CD4-positive, alpha-beta memory T cell (primary cell): ENCODE measurements at regions of chr16 and their contacts with region 1.

Region 1: DNA sequence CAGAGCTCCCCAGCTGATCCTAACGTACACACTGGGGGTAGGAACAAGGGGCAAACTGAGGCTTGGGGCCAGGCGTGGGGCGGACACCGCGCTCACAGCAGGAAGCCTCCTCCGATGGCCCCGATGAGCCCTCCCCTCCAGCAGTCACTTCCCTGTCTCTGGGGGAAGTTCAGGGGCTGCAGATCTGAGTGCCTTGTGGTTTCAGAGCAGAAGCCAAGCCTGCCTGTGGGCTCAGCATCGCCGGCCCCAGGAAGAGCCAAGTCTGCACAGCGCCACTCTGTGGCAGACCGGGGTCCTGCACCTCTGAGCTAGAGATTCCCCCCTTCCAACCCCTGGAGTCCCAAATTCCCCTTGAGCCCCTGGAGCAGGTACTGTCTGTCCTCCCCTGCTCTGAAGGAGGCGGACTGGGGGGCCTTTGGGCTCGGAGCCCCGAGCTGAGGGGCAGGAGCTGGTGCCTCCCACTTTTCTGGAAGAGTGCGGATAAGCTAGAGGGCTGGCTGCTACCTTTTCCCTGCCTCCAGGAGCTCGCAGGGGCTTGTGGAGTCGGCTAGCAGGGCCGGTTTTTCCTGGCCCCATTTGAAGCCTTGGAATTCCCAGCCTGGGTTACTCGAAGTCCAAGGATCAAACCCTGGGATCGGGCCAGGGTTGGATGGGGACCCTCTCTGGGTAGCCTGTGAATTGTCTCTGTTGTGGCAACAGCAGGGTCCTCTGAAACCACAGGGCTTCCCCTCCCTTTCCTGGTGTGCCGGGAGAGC is 2.9 kb downstream of the GSE1 start:
- DNase-seq: peak; percentile 72 to 78 (median 74)
- H3K4me3 ChIP-seq: peak overlapping the region in 1 of 2 donors; percentile 23
- H3K4me3 Mint-ChIP-seq: peak overlapping the region; percentile 70 to 89 (median 78)
- H3K27ac ChIP-seq: no peak overlapping the region
- H3K27ac Mint-ChIP-seq: peak overlapping the region in 5 of 7 donors; percentile 50 to 73 (median 57)
- H3K4me1 ChIP-seq: peaks cover 42% of the 10 kb centered on the region
- H3K4me1 Mint-ChIP-seq: peaks cover 11 to 39% (median 25%) of the 10 kb centered on the region in 4 donors
- H3K27me3 ChIP-seq: no peaks in the 10 kb centered on the region
- H3K27me3 Mint-ChIP-seq: no peaks in the 10 kb centered on the region

Region 2: DNA sequence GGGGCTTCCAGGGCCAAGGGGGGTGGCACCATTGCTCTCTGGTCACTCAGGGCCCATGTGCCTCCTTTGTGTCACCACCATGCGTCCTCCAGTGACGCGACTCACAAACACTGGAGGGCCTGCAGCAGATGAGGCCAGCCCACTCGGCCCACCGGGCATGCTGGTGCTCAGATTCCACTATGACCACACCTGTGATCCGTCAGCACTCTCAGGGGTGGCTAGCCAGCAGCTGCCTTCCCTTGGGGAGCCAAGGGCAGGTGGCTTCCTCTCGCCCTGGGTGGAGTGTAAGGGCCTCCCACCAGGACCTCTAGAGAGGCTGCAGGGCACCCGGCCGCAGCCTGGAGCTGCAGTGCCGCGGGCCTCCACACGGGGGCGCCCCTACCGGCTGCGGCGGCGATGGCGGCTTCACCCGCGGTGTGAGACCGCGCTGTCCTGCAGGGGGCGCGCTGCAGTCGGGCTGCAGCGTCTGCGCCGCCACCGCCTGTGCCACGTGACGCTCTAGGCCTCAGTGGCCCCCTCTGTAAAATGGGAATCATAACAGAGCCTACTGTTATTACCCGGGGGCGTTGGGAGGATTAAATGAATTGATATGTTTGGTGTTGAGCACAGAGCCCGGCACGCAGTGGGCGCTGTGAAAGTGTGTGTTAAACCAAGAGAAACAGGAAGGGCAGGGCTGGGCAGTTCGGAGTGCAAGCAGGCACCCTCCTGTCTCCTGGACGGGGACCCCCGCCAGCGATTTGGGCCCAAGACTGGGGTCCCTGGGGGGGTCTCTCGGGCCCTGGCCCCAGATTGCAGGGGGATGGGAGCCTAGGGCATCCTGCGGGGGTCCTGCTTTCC is 195.3 kb before region 1 on chr16:
- CTCF ChIA-PET with region 1: interaction called, 77 read pairs
- POLR2A ChIA-PET with region 1: interaction called, 7 read pairs
- intact Hi-C with region 1: no loop called
- DNase-seq: peak in 4 of 5 donors; percentile 72 to 80 (median 72)
- H3K4me3 ChIP-seq: no peak overlapping the region
- H3K4me3 Mint-ChIP-seq: no peak overlapping the region
- H3K27ac ChIP-seq: no peak overlapping the region
- H3K27ac Mint-ChIP-seq: peak overlapping the region in 2 of 7 donors; percentile 21 to 89
- H3K4me1 ChIP-seq: peaks cover 4% of the 10 kb centered on the region
- H3K4me1 Mint-ChIP-seq: peaks cover 0 to 2% (median under 1%) of the 10 kb centered on the region in 4 donors
- H3K27me3 ChIP-seq: no peaks in the 10 kb centered on the region
- H3K27me3 Mint-ChIP-seq: peaks cover 3 to 7% of the 10 kb centered on the region in 2 donors

Region 3: GRCh38 chr16:85448557-85449197 is 167.4 kb before region 1 on chr16:
- CTCF ChIA-PET with region 1: interaction called, 14 read pairs
- POLR2A ChIA-PET with region 1: interaction called, 9 read pairs
- intact Hi-C with region 1: no loop called
- DNase-seq: peak in 4 of 5 donors; percentile 46 to 55 (median 51)
- H3K4me3 ChIP-seq: no peak overlapping the region
- H3K4me3 Mint-ChIP-seq: peak overlapping the region; percentile 18 to 82 (median 72)
- H3K27ac ChIP-seq: no peak overlapping the region
- H3K27ac Mint-ChIP-seq: peak overlapping the region; percentile 83 to 91 (median 89)
- H3K4me1 ChIP-seq: peaks cover 33% of the 10 kb centered on the region
- H3K4me1 Mint-ChIP-seq: peaks cover 13 to 39% (median 16%) of the 10 kb centered on the region in 4 donors
- H3K27me3 ChIP-seq: no peaks in the 10 kb centered on the region
- H3K27me3 Mint-ChIP-seq: no peaks in the 10 kb centered on the region

Region 4: GRCh38 chr16:85528528-85529387 is 87.3 kb before region 1 on chr16:
- CTCF ChIA-PET with region 1: interaction called, 14 read pairs
- POLR2A ChIA-PET with region 1: no interaction called
- intact Hi-C with region 1: no loop called
- DNase-seq: peak in 1 of 5 donors; percentile 15
- H3K4me3 ChIP-seq: no peak overlapping the region
- H3K4me3 Mint-ChIP-seq: no peak overlapping the region
- H3K27ac ChIP-seq: no peak overlapping the region
- H3K27ac Mint-ChIP-seq: peak overlapping the region in 1 of 7 donors; percentile 61
- H3K4me1 ChIP-seq: no peaks in the 10 kb centered on the region
- H3K4me1 Mint-ChIP-seq: no peaks in the 10 kb centered on the region
- H3K27me3 ChIP-seq: no peaks in the 10 kb centered on the region
- H3K27me3 Mint-ChIP-seq: no peaks in the 10 kb centered on the region

Region 5: GRCh38 chr16:85626191-85626981 is 10.4 kb after region 1 on chr16:
- CTCF ChIA-PET with region 1: interaction called, 14 read pairs
- POLR2A ChIA-PET with region 1: no interaction called
- intact Hi-C with region 1: no loop called
- DNase-seq: no peak
- H3K4me3 ChIP-seq: no peak overlapping the region
- H3K4me3 Mint-ChIP-seq: peak overlapping the region in 1 of 8 donors; percentile 24
- H3K27ac ChIP-seq: no peak overlapping the region
- H3K27ac Mint-ChIP-seq: peak overlapping the region in 2 of 7 donors; percentile 31 to 57
- H3K4me1 ChIP-seq: peaks cover 4% of the 10 kb centered on the region
- H3K4me1 Mint-ChIP-seq: peaks cover 8 to 44% (median 23%) of the 10 kb centered on the region in 4 donors
- H3K27me3 ChIP-seq: no peaks in the 10 kb centered on the region
- H3K27me3 Mint-ChIP-seq: no peaks in the 10 kb centered on the region